Heart left ventricle (tissue), 16 donors: ENCODE measurements at regions of chr17 and their contacts with region 1.

Region 1: GRCh38 chr17:76547184-76547641 is 7.4 kb downstream of the PRCD start:
- DNase-seq: peak in 4 of 5 donors; percentile 74 to 77 (median 75)
- ATAC-seq: peak; percentile 19 to 67 (median 50)
- H3K4me3 ChIP-seq: no peak overlapping the region
- H3K27ac ChIP-seq: peak overlapping the region in 11 of 12 donors; percentile 0 to 84 (median 24)
- H3K4me1 ChIP-seq: peaks cover 10 to 61% (median 46%) of the 10 kb centered on the region in 12 donors
- H3K27me3 ChIP-seq: no peaks in the 10 kb centered on the region
- CTCF ChIP-seq: peak; percentile 58 to 81 (median 75)
- POLR2A ChIP-seq: no peak

Region 2: DNA sequence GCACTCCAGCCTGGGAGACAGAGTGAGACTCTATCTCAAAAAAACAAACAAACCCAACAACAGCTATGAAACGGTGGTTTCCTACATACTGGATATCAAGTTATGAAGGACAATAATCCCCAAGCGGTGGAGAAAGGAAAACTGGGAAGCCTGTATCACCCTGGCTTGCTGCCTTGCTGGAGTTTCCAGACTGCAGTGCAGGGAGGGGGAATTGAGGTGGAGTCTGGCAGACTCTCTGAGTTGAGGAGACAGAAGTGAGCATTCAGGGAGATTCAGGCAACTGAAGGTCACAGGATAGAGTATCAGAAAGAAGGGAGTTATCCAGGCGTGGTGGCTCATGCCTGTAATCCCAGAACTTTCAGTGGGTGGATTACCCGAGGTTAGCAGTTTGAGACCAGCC is 251.0 kb before region 1 on chr17:
- intact Hi-C with region 1: no loop called
- DNase-seq: no peak
- ATAC-seq: peak; percentile 15 to 63 (median 49)
- H3K4me3 ChIP-seq: no peak overlapping the region
- H3K27ac ChIP-seq: no peak overlapping the region
- H3K4me1 ChIP-seq: peaks cover 0 to 15% (median 5%) of the 10 kb centered on the region in 12 donors
- H3K27me3 ChIP-seq: no peaks in the 10 kb centered on the region
- CTCF ChIP-seq: no peak
- POLR2A ChIP-seq: no peak

Region 3: GRCh38 chr17:76458580-76459490 is 88.4 kb before region 1 on chr17:
- intact Hi-C with region 1: loop called in 1 of 10 experiments (anchors 5 kb)
- DNase-seq: peak; percentile 41 to 74 (median 56)
- ATAC-seq: peak; percentile 84 to 86 (median 84)
- H3K4me3 ChIP-seq: no peak overlapping the region
- H3K27ac ChIP-seq: no peak overlapping the region
- H3K4me1 ChIP-seq: no peaks in the 10 kb centered on the region
- H3K27me3 ChIP-seq: no peaks in the 10 kb centered on the region
- CTCF ChIP-seq: peak; percentile 19 to 60 (median 44)
- POLR2A ChIP-seq: no peak

Region 4: GRCh38 chr17:76467366-76467765 is 79.8 kb before region 1 on chr17 and contains the start of gene AANAT:
- intact Hi-C with region 1: loop called in 2 of 10 experiments (anchors 5 kb)
- DNase-seq: peak in 1 of 5 donors; percentile 50
- ATAC-seq: no peak
- H3K4me3 ChIP-seq: no peak within 1 kb of the TSS
- H3K27ac ChIP-seq: no peak within 1 kb of the TSS
- H3K4me1 ChIP-seq: peaks cover 0 to 12% (median 2%) of the 10 kb centered on the region in 12 donors
- H3K27me3 ChIP-seq: no peaks in the 10 kb centered on the region
- CTCF ChIP-seq: no peak
- POLR2A ChIP-seq: no peak
- total RNA-seq, gene AANAT: not detected